ENCODE measurements at regions of chr2 and their contacts with region 1.

Region 1: DNA sequence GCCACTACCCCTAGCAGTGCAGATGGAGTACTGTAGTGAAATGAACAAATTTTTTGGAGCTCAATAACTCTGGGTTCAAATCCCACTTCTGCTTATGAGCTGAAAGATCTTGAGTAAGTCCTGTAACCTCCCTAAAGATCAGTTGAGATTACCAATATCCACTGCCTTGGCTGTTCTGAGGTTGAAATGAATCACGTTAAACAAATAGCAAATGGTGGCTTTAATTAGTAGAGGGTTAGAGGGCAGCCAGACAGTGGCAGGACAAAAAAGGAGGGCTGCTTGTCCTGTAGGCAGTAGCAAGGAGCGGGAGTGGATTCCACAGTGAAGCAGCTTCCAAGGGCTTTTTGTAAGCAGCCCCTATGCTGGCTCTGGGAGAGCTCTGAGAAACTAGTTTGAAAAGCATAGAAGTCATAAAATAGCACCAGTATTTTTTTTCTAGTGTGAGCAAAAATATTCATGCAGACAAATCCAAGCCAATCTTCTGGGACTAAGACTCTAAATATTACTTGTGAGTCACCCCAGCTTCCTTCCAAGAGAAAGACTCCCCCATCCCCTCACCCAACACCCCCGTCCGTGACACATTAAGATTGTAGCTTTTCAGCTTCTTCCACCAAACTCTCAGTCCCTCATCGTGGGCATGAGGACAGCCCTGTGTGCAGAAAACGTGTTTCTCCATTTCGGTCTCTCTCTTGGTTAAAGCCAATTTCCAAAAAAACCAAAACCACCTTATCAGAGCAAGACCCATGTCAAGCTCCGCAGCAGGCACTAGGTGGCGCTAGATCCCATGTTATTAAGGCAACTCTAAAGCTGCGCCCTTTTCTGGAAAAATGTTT is 123.5 kb upstream of the LGALSL start:
- DNase-seq: peak; percentile 52 to 88 (median 82)
- ATAC-seq: peak; percentile 15
- H3K4me3 ChIP-seq: no peak overlapping the region
- H3K4me3 Mint-ChIP-seq: peak overlapping the region; percentile 58
- H3K27ac ChIP-seq: no peak overlapping the region
- H3K27ac Mint-ChIP-seq: peak overlapping the region; percentile 52
- H3K4me1 ChIP-seq: peaks cover 28% of the 10 kb centered on the region
- H3K4me1 Mint-ChIP-seq: peaks cover 33% of the 10 kb centered on the region
- H3K27me3 ChIP-seq: no peaks in the 10 kb centered on the region
- H3K27me3 Mint-ChIP-seq: no peaks in the 10 kb centered on the region
- CTCF ChIP-seq: peak; percentile 91

Region 2: GRCh38 chr2:63692002-63692606 is 638.4 kb before region 1 on chr2:
- CTCF ChIA-PET with region 1: no interaction called
- POLR2A ChIA-PET with region 1: no interaction called
- intact Hi-C with region 1: loop called (anchors 5 kb)
- DNase-seq: peak in 4 of 9 experiments; percentile 5 to 68 (median 33)
- ATAC-seq: peak; percentile 68
- H3K4me3 ChIP-seq: no peak overlapping the region
- H3K4me3 Mint-ChIP-seq: no peak overlapping the region
- H3K27ac ChIP-seq: no peak overlapping the region
- H3K27ac Mint-ChIP-seq: no peak overlapping the region
- H3K4me1 ChIP-seq: no peaks in the 10 kb centered on the region
- H3K4me1 Mint-ChIP-seq: no peaks in the 10 kb centered on the region
- H3K27me3 ChIP-seq: no peaks in the 10 kb centered on the region
- H3K27me3 Mint-ChIP-seq: no peaks in the 10 kb centered on the region
- CTCF ChIP-seq: peak; percentile 82

Region 3: DNA sequence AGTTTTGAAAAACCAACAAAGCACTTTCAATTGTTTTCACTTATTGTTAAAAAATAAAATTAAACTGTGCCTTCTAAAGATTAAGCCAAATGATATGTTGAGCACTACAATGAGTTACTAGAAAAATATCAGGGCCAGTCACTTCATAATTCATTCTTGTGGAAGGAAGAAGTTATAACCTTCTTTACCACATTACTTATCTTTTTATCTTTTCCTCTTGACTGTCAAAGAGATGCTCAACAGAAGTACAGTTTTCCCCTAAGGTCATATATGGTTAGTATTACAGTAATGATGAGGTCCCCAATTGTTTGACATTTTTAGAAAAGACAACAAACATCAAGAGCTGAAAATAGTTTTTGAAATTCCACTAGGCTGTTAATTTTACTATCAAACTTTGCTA is 195.7 kb before region 1 on chr2:
- CTCF ChIA-PET with region 1: interaction called, 10 read pairs
- POLR2A ChIA-PET with region 1: interaction called, 3 read pairs
- intact Hi-C with region 1: no loop called
- DNase-seq: no peak
- ATAC-seq: no peak
- H3K4me3 ChIP-seq: no peak overlapping the region
- H3K4me3 Mint-ChIP-seq: no peak overlapping the region
- H3K27ac ChIP-seq: no peak overlapping the region
- H3K27ac Mint-ChIP-seq: no peak overlapping the region
- H3K4me1 ChIP-seq: peaks cover 34% of the 10 kb centered on the region
- H3K4me1 Mint-ChIP-seq: peaks cover 66% of the 10 kb centered on the region
- H3K27me3 ChIP-seq: no peaks in the 10 kb centered on the region
- H3K27me3 Mint-ChIP-seq: no peaks in the 10 kb centered on the region
- CTCF ChIP-seq: no peak

Region 4: GRCh38 chr2:64228126-64228678 is 102.3 kb before region 1 on chr2:
- CTCF ChIA-PET with region 1: interaction called, 6 read pairs
- POLR2A ChIA-PET with region 1: interaction called, 3 read pairs
- intact Hi-C with region 1: loop called in 1 of 2 experiments (anchors 5 kb)
- DNase-seq: peak; percentile 22 to 73 (median 54)
- ATAC-seq: peak; percentile 89
- H3K4me3 ChIP-seq: peak overlapping the region; percentile 53 to 56
- H3K4me3 Mint-ChIP-seq: peak overlapping the region; percentile 91
- H3K27ac ChIP-seq: no peak overlapping the region
- H3K27ac Mint-ChIP-seq: peak overlapping the region; percentile 63
- H3K4me1 ChIP-seq: no peaks in the 10 kb centered on the region
- H3K4me1 Mint-ChIP-seq: peaks cover 19% of the 10 kb centered on the region
- H3K27me3 ChIP-seq: no peaks in the 10 kb centered on the region
- H3K27me3 Mint-ChIP-seq: peaks cover 2% of the 10 kb centered on the region
- CTCF ChIP-seq: no peak

Region 5: DNA sequence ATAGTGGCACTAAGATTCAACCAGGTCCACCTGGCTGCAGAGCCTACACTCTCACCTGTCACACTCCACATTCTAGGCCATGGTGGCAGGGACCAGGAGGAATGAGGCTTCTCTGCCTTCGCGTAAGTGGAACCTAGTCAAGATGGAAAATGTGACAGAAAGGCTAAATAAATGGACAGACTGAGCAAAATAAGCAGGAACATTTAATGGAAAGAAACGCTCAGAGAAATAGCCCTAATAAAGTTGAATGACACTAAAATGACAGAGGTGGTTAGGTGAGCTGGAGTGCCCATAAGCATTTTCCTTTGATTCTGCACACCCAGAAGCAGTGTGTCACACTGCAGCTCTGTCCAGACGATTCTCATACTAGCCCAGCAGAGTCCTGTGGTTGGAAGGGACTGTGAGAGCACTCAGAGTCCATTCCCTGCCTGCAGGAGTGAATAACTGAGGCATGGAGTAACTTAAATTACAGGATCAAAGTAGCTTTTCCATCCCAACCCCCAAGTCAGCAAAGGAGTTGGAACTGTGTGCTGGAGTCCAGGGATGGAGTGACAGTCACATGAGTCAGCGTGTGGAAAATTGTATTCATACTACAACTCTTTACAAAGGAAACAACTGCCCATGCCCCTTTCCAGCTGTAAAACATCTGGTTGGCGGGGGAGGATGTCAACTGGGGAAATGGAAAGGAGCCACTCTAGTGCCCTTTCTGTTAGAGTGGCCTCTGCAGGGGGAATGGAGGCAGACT is 18.1 kb after region 1 on chr2:
- CTCF ChIA-PET with region 1: interaction called, 41 read pairs
- POLR2A ChIA-PET with region 1: no interaction called
- intact Hi-C with region 1: no loop called
- DNase-seq: no peak
- ATAC-seq: no peak
- H3K4me3 ChIP-seq: no peak overlapping the region
- H3K4me3 Mint-ChIP-seq: no peak overlapping the region
- H3K27ac ChIP-seq: no peak overlapping the region
- H3K27ac Mint-ChIP-seq: no peak overlapping the region
- H3K4me1 ChIP-seq: no peaks in the 10 kb centered on the region
- H3K4me1 Mint-ChIP-seq: no peaks in the 10 kb centered on the region
- H3K27me3 ChIP-seq: no peaks in the 10 kb centered on the region
- H3K27me3 Mint-ChIP-seq: peaks cover 2% of the 10 kb centered on the region
- CTCF ChIP-seq: no peak

Region 6: GRCh38 chr2:64523666-64524603 is 193.4 kb after region 1 on chr2 and contains the start of gene AFTPH:
- CTCF ChIA-PET with region 1: interaction called, 54 read pairs
- POLR2A ChIA-PET with region 1: interaction called, 12 read pairs
- intact Hi-C with region 1: loop called (anchors 1 kb)
- DNase-seq: peak; percentile 99 to 100 (median 99)
- ATAC-seq: peak; percentile 88
- H3K4me3 ChIP-seq: peak within 1 kb of the TSS; percentile 69 to 83
- H3K4me3 Mint-ChIP-seq: peak within 1 kb of the TSS; percentile 99
- H3K27ac ChIP-seq: peak within 1 kb of the TSS; percentile 77 to 89
- H3K27ac Mint-ChIP-seq: peak within 1 kb of the TSS; percentile 99
- H3K4me1 ChIP-seq: peaks cover 20% of the 10 kb centered on the region
- H3K4me1 Mint-ChIP-seq: peaks cover 38% of the 10 kb centered on the region
- H3K27me3 ChIP-seq: no peaks in the 10 kb centered on the region
- H3K27me3 Mint-ChIP-seq: no peaks in the 10 kb centered on the region
- CTCF ChIP-seq: no peak
- total RNA-seq, gene AFTPH: 23.0 to 25.9 TPM

Region 7: DNA sequence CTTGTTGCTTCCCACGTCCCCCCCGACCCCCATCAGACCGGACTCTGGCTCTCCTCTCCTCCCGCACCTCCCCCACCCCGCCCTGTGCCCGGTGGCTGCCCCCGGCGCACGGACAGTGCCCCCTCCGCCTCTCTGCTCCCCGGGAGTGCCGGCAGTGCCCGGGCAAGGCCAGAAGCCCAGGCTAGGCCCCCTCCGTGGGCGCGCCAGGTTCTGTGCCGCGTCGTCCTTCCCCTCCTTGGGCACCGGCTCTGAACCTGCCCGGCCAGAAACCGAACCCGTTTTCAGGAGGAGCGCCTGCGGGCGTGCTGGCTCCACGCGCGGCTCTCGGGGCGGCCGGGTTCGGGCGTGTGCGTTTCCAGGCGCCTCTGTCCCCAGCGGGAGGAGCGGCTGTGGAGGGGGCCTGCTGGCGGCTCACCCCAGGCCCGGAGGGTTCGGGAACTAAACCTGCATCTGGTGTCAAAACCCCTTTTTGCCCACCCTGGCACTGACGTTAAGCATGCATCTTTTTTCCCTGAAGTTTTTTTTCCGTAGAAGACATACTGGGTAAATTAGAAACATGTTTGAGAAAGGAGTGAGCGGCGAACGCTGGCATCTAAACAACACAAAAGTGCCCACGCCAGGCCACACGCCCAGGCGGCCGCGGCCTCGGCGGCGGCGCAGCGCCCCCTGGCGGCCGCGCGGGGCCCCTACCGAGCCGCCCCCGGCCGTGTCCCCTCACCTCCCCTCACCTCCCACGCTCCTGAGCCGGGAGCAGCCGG is 534.8 kb after region 1 on chr2:
- CTCF ChIA-PET with region 1: interaction called, 16 read pairs
- POLR2A ChIA-PET with region 1: no interaction called
- intact Hi-C with region 1: loop called in 1 of 2 experiments (anchors 2 kb)
- DNase-seq: peak; percentile 39 to 84 (median 55)
- ATAC-seq: peak; percentile 91
- H3K4me3 ChIP-seq: peak overlapping the region; percentile 61 to 76
- H3K4me3 Mint-ChIP-seq: peak overlapping the region; percentile 81
- H3K27ac ChIP-seq: no peak overlapping the region
- H3K27ac Mint-ChIP-seq: no peak overlapping the region
- H3K4me1 ChIP-seq: peaks cover 13% of the 10 kb centered on the region
- H3K4me1 Mint-ChIP-seq: no peaks in the 10 kb centered on the region
- H3K27me3 ChIP-seq: peaks cover 0 to 2% of the 10 kb centered on the region in 2 experiments
- H3K27me3 Mint-ChIP-seq: peaks cover 4% of the 10 kb centered on the region
- CTCF ChIP-seq: peak; percentile 80

Measured in CD8-positive, alpha-beta T cell (primary cell).